ENCODE measurements at regions of chr14 and their contacts with region 1.

Region 1: GRCh38 chr14:93175492-93175891 is 9.2 kb downstream of the MOAP1 start:
- DNase-seq: no peak
- H3K4me3 ChIP-seq: no peak overlapping the region
- H3K27ac ChIP-seq: no peak overlapping the region
- H3K4me1 ChIP-seq: peaks cover 3% of the 10 kb centered on the region
- H3K27me3 ChIP-seq: no peaks in the 10 kb centered on the region
- CTCF ChIP-seq: no peak
- EP300 ChIP-seq: no peak
- POLR2A ChIP-seq: no peak

Region 2: GRCh38 chr14:91901449-91902226 is 1273.9 kb before region 1 on chr14:
- intact Hi-C with region 1: loop called in 1 of 4 experiments (anchors 5 kb)
- DNase-seq: peak; percentile 45 to 78 (median 52)
- H3K4me3 ChIP-seq: no peak overlapping the region
- H3K27ac ChIP-seq: peak overlapping the region in 1 of 2 donors; percentile 50
- H3K4me1 ChIP-seq: peaks cover 15% of the 10 kb centered on the region
- H3K27me3 ChIP-seq: no peaks in the 10 kb centered on the region
- CTCF ChIP-seq: no peak
- EP300 ChIP-seq: peak; percentile 4
- POLR2A ChIP-seq: no peak

Region 3: GRCh38 chr14:93454224-93454623 is 278.7 kb after region 1 on chr14:
- intact Hi-C with region 1: no loop called
- DNase-seq: no peak
- H3K4me3 ChIP-seq: no peak overlapping the region
- H3K27ac ChIP-seq: no peak overlapping the region
- H3K4me1 ChIP-seq: no peaks in the 10 kb centered on the region
- H3K27me3 ChIP-seq: no peaks in the 10 kb centered on the region
- CTCF ChIP-seq: no peak
- EP300 ChIP-seq: no peak
- POLR2A ChIP-seq: no peak

Measured in ovary (tissue), 10 donors.